ENCODE measurements at regions of chr11 and their contacts with region 1.

Region 1: GRCh38 chr11:13210424-13210823 is 67.2 kb upstream of the BMAL1 start:
- DNase-seq: no peak
- H3K4me3 Mint-ChIP-seq: no peak overlapping the region
- H3K27ac Mint-ChIP-seq: no peak overlapping the region
- H3K4me1 Mint-ChIP-seq: peaks cover 28% of the 10 kb centered on the region
- H3K27me3 Mint-ChIP-seq: peaks cover 11% of the 10 kb centered on the region

Region 2: DNA sequence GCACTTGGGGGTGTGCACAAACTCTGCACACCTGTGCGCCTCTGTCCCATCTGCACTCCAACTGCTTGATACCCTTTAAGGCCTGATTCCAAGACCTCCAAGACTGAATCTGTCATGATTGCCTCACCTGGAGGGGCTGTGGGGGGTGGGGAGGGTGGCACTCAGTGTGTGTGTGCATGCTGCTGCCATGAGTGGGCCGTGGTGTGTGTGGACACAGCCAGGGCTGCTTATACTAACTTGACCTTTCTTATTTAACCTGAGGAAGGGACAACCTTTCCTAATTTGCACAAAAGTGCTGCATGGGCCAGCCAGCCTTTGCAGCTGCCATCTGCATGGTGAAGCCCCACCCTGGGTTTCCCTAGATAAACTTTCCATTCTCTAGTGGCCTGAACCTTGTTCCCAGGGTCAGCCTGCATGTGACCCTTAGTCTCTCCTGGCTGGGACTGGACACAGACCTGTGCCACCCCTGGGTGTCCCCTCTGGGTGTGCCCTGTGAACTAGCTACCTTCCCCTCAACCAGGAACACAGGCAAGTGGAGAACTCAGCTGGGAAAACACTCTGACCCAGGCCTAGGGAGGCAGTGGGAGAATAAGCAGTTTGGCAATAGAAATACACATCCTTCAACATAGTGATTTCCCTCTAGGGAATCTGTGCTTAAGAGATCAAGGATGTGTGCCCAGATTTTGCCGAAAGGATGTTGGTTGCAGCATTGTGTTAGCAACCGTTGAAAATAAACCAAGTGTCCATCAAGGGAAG is 1156.6 kb before region 1 on chr11:
- intact Hi-C with region 1: no loop called
- DNase-seq: no peak
- H3K4me3 Mint-ChIP-seq: no peak overlapping the region
- H3K27ac Mint-ChIP-seq: no peak overlapping the region
- H3K4me1 Mint-ChIP-seq: peaks cover 9% of the 10 kb centered on the region
- H3K27me3 Mint-ChIP-seq: no peaks in the 10 kb centered on the region

Region 3: DNA sequence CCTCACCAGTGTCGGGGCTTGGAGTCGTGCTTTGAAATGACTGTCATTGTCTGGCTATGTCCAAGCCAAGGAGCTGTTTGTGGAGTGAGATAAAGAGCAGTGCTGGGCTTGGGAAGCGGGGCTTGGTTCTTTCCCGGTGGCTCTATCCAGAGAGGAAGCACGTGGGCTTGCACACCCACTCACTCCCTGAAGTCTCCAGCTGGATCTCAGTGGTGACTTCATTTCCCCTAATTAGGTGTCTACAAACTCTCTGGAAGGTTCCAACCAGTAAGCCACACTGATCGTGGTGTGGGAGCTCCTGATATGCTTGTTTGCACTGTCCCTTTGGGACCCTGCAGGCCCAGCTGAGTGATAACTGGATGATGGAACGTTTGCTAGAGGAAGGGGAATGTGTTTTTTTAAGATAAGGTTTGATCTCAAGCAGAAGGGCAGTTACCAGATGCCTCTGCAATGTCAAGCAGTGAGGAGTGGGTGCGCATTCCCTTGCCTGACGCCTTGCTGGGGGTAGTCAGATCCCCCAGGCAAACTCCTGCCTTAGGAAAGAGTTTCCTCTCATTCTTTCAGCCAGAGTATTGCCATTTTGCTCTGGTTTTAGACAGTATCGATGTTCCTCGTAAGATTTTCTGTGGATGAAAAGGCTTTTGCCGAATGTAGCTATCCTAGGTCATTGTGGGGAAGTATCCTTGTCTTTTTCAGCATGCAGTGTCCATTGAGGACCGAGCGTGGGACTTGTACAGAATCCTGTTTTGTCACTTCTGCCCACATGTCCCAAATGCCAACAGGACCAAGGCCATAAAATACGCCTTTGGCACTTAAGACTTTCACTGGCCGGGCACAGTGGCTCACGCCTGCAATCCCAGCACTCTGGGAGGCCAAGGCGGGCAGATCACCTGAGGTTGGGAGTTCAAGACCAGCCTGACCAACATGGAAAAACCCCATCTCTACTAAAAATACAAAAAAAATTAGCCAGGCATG is 1009.1 kb before region 1 on chr11:
- intact Hi-C with region 1: no loop called
- DNase-seq: no peak
- H3K4me3 Mint-ChIP-seq: peak overlapping the region; percentile 66
- H3K27ac Mint-ChIP-seq: peak overlapping the region; percentile 71
- H3K4me1 Mint-ChIP-seq: peaks cover 80% of the 10 kb centered on the region
- H3K27me3 Mint-ChIP-seq: no peaks in the 10 kb centered on the region

Region 4: DNA sequence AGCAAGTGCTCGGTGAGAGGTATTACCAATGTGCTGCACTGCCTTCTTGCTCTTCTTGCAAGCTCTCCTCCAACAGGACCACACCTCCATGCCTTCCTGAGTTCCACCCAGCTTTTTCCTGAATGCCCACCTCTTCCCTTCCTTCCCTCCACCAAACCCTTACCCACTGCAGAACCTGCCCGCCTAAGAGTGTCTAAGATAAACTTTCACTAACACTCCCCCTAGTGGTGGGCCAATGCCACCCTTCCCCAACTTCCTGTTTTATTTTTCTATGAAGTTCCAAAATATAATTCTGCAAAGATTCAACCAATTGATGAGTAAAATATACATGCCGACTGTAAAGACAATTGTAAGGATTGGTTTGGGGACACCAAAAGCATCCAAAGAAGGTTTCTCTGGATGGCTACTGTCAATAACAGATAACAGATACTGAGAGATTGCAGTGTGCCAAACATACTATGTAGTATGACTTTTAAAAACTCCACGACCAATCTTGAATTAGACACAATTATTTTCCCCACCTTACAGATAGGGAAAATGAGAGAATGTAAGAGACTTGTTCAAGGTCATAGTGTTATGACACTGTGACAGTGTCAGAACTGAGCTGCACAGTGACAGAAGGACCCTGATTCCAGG is 28.6 kb after region 1 on chr11:
- intact Hi-C with region 1: loop called (anchors 2 kb)
- DNase-seq: peak; percentile 14
- H3K4me3 Mint-ChIP-seq: no peak overlapping the region
- H3K27ac Mint-ChIP-seq: no peak overlapping the region
- H3K4me1 Mint-ChIP-seq: peaks cover 2% of the 10 kb centered on the region
- H3K27me3 Mint-ChIP-seq: peaks cover 37% of the 10 kb centered on the region

Region 5: DNA sequence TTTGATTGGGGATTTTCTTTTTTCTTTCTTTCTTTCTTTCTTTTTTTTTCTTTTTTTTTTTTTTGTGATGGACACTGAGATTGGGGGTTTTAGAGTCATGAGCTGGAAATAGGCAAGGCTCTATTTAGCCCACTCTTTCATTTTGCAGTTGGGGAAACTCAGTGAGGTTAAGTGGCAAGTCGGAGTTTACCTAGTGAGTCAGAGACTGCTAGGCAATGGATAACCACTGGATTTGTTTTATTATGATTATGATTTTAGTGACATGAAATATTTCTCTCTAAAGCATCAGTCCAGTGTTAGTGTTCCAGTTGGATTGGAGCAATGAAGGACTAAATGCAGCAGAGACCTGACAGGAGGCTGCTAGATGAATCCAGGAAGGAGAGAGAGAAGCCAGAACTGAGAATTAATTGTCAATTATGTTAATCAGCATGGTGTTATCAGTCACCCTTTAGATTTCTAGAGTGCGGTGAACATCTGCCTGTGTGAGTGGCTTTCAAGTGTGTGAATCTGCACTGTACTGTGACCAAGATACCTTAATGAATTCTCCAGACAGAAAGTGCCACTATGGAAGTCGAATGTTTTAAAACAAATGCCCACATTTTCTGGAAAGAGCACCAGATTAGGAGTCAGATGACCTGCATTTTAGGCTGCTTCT is 78.1 kb after region 1 on chr11:
- intact Hi-C with region 1: loop called (anchors 1 kb)
- DNase-seq: no peak
- H3K4me3 Mint-ChIP-seq: peak overlapping the region; percentile 47
- H3K27ac Mint-ChIP-seq: peak overlapping the region; percentile 91
- H3K4me1 Mint-ChIP-seq: peaks cover 46% of the 10 kb centered on the region
- H3K27me3 Mint-ChIP-seq: no peaks in the 10 kb centered on the region

Region 6: GRCh38 chr11:13343931-13344717 is 133.7 kb after region 1 on chr11:
- intact Hi-C with region 1: loop called (anchors 1 kb)
- DNase-seq: peak; percentile 60
- H3K4me3 Mint-ChIP-seq: no peak overlapping the region
- H3K27ac Mint-ChIP-seq: no peak overlapping the region
- H3K4me1 Mint-ChIP-seq: peaks cover 17% of the 10 kb centered on the region
- H3K27me3 Mint-ChIP-seq: no peaks in the 10 kb centered on the region

Measured in activated T-helper 2 cell treated with anti-CD3 and anti-CD28 coated beads, Interferon-gamma antibody, Interleukin-2, Interleukin-4, amounts not matched to agents 10 μg/mL and 5 μg/mL and 100 μg/mL, durations not matched to agents 14 hours and 24 hours and 36 hours (primary cell).